Calu3 (cell line): ENCODE measurements at regions of chr9 and their contacts with region 1.

Region 1: DNA sequence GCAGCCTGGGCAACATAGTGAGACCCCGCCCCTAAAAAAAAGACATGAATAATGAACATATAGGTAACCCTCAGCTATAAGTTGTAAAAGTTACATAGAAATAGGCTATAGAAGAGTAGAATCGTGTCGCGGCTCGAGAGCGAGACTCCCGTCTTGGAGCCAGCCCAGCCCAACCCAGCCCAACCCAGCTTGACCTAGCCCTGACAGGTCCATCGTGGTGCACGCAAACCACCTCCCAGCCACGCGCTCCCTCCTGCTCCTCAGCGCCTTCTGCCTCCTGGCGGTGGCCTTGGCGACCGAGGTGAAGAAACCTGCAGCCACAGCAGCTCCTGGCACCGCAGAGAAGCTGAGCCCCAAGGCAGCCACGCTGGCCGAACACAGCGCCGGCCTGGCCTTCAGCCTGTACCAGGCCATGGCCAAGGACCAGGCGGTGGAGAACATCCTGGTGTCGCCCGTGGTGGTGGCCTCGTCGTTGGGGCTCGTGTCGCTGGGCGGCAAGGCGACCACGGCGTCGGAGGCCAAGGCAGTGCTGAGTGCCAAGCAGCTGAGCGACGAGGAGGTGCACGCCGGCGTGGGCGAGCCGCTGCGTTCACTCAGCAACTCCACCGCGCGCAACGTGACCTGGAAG is 10.8 kb downstream of the KIF24 start:
- DNase-seq: no peak
- H3K4me3 Mint-ChIP-seq: no peak overlapping the region
- H3K27ac Mint-ChIP-seq: no peak overlapping the region
- H3K4me1 Mint-ChIP-seq: no peaks in the 10 kb centered on the region
- H3K27me3 Mint-ChIP-seq: no peaks in the 10 kb centered on the region
- CTCF ChIP-seq: no peak

Region 2: GRCh38 chr9:34240006-34240405 is 78.3 kb before region 1 on chr9:
- CTCF ChIA-PET with region 1: interaction called, 12 read pairs
- intact Hi-C with region 1: no loop called
- DNase-seq: no peak
- H3K4me3 Mint-ChIP-seq: no peak overlapping the region
- H3K27ac Mint-ChIP-seq: no peak overlapping the region
- H3K4me1 Mint-ChIP-seq: no peaks in the 10 kb centered on the region
- H3K27me3 Mint-ChIP-seq: no peaks in the 10 kb centered on the region
- CTCF ChIP-seq: no peak